Caco-2 (cell line): ENCODE measurements at regions of chr4 and their contacts with region 1.

Region 1: DNA sequence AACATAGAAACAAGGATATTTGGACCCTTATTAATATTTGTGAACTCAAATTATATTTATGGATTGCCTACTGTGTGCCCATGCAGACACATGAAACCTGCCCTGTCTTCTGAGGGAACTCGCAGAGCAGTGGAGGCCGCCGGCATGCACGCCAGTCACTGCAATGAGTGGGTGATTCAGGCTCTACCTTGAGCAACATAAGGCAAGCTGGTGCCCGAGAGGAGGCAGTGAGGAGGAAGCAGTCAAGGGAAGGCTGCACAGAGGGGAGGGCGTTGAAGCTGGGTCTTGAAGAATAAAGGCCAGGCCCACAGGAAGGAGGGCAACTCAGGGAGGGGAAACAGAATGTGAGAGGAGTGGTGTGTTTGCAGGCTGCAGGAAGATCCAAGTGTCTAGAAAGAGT is 52.8 kb downstream of the PPEF2 start:
- DNase-seq: no peak
- H3K4me3 ChIP-seq: no peak overlapping the region
- H3K4me3 Mint-ChIP-seq: no peak overlapping the region
- H3K27ac Mint-ChIP-seq: no peak overlapping the region
- H3K4me1 ChIP-seq: peaks cover 19% of the 10 kb centered on the region
- H3K4me1 Mint-ChIP-seq: peaks cover 7% of the 10 kb centered on the region
- H3K27me3 ChIP-seq: no peaks in the 10 kb centered on the region
- H3K27me3 Mint-ChIP-seq: no peaks in the 10 kb centered on the region
- CTCF ChIP-seq: no peak

Region 2: GRCh38 chr4:75653845-75654503 is 195.5 kb before region 1 on chr4:
- CTCF ChIA-PET with region 1: interaction called, 3 read pairs
- POLR2A ChIA-PET with region 1: no interaction called
- intact Hi-C with region 1: loop called (anchors 1 kb)
- DNase-seq: peak in 1 of 2 experiments; percentile 56
- H3K4me3 ChIP-seq: no peak overlapping the region
- H3K4me3 Mint-ChIP-seq: no peak overlapping the region
- H3K27ac Mint-ChIP-seq: no peak overlapping the region
- H3K4me1 ChIP-seq: peaks cover 37% of the 10 kb centered on the region
- H3K4me1 Mint-ChIP-seq: peaks cover 6% of the 10 kb centered on the region
- H3K27me3 ChIP-seq: no peaks in the 10 kb centered on the region
- H3K27me3 Mint-ChIP-seq: no peaks in the 10 kb centered on the region
- CTCF ChIP-seq: peak; percentile 43 to 67

Region 3: DNA sequence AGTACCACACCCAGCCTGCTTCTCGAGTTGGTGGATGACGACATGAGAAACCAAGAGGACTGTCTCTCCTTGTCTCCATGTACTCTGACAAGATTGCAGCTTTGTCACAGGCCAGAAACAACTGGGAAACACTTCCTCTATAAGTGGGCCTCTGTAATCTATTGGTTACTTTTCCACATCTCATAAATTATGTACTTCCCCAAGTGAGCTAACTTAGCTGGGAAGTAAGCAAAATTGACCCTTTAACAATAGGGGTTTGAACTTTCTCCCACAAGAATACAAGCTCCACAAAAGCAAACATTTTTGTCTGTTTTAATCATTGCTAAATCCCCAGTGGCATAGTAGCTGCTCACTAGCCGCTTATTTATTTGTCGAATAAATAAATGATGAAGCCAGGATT is 139.2 kb before region 1 on chr4:
- CTCF ChIA-PET with region 1: no interaction called
- POLR2A ChIA-PET with region 1: no interaction called
- intact Hi-C with region 1: no loop called
- DNase-seq: no peak
- H3K4me3 ChIP-seq: no peak overlapping the region
- H3K4me3 Mint-ChIP-seq: no peak overlapping the region
- H3K27ac Mint-ChIP-seq: no peak overlapping the region
- H3K4me1 ChIP-seq: peaks cover 4% of the 10 kb centered on the region; the same call in 1 of the 2 replicates
- H3K4me1 Mint-ChIP-seq: peaks cover 4% of the 10 kb centered on the region
- H3K27me3 ChIP-seq: no peaks in the 10 kb centered on the region
- H3K27me3 Mint-ChIP-seq: no peaks in the 10 kb centered on the region
- CTCF ChIP-seq: no peak

Region 4: GRCh38 chr4:75724066-75724866 is 125.2 kb before region 1 on chr4 and contains the start of gene USO1:
- CTCF ChIA-PET with region 1: interaction called, 13 read pairs
- POLR2A ChIA-PET with region 1: interaction called, 5 read pairs
- intact Hi-C with region 1: loop called (anchors 1 kb)
- DNase-seq: peak; percentile 98 to 99
- H3K4me3 ChIP-seq: peak within 1 kb of the TSS; percentile 99
- H3K4me3 Mint-ChIP-seq: peak within 1 kb of the TSS; percentile 90
- H3K27ac Mint-ChIP-seq: peak within 1 kb of the TSS; percentile 99
- H3K4me1 ChIP-seq: peaks cover 18% of the 10 kb centered on the region; the same call in 1 of the 2 replicates
- H3K4me1 Mint-ChIP-seq: peaks cover 15% of the 10 kb centered on the region
- H3K27me3 ChIP-seq: no peaks in the 10 kb centered on the region
- H3K27me3 Mint-ChIP-seq: no peaks in the 10 kb centered on the region
- CTCF ChIP-seq: peak; percentile 76 to 81
- total RNA-seq, gene USO1: 55.4 and 59.7 TPM in 2 replicates

Region 5: DNA sequence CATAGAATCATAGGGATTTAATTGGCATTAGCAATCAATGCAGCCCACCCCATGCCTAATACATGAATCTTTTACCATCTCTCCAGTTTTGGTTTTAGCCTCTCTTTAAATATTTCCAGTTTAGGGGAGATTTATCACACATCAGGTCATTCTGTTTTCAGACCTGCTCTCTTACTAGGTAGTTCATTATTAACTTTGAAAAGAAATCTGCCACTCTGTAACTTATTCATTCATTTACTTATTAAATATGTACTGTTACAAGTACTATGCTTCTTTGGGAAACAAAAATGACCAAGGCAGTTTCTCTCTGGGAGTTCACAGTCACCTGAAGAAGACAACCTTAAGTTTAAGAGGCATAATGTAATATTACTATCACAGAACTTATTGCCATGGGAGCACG is 62.9 kb before region 1 on chr4:
- CTCF ChIA-PET with region 1: no interaction called
- POLR2A ChIA-PET with region 1: no interaction called
- intact Hi-C with region 1: loop called (anchors 2 kb)
- DNase-seq: no peak
- H3K4me3 ChIP-seq: no peak overlapping the region
- H3K4me3 Mint-ChIP-seq: no peak overlapping the region
- H3K27ac Mint-ChIP-seq: no peak overlapping the region
- H3K4me1 ChIP-seq: no peaks in the 10 kb centered on the region
- H3K4me1 Mint-ChIP-seq: no peaks in the 10 kb centered on the region
- H3K27me3 ChIP-seq: no peaks in the 10 kb centered on the region
- H3K27me3 Mint-ChIP-seq: no peaks in the 10 kb centered on the region
- CTCF ChIP-seq: no peak

Region 6: DNA sequence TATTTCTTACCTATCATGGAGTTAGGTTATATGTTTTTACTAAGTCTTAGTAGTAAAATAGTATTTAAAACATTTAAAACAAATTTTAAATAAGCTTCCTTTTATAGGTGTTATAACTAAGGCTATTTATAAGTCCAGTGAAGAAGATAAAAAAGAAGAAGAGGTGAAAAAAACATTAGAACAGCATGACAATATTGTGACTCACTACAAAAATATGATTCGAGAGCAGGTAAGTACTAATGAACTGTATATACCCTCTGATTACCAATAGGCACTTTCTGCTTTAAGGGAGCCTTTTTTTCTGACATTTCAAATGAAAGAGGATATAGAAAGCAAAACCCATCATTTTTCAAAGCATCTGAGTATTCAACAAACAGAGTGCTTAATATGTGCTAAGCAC is 48.5 kb before region 1 on chr4:
- CTCF ChIA-PET with region 1: interaction called, 3 read pairs
- POLR2A ChIA-PET with region 1: no interaction called
- intact Hi-C with region 1: loop called (anchors 5 kb)
- DNase-seq: no peak
- H3K4me3 ChIP-seq: no peak overlapping the region
- H3K4me3 Mint-ChIP-seq: no peak overlapping the region
- H3K27ac Mint-ChIP-seq: no peak overlapping the region
- H3K4me1 ChIP-seq: no peaks in the 10 kb centered on the region
- H3K4me1 Mint-ChIP-seq: no peaks in the 10 kb centered on the region
- H3K27me3 ChIP-seq: no peaks in the 10 kb centered on the region
- H3K27me3 Mint-ChIP-seq: no peaks in the 10 kb centered on the region
- CTCF ChIP-seq: no peak

Region 7: DNA sequence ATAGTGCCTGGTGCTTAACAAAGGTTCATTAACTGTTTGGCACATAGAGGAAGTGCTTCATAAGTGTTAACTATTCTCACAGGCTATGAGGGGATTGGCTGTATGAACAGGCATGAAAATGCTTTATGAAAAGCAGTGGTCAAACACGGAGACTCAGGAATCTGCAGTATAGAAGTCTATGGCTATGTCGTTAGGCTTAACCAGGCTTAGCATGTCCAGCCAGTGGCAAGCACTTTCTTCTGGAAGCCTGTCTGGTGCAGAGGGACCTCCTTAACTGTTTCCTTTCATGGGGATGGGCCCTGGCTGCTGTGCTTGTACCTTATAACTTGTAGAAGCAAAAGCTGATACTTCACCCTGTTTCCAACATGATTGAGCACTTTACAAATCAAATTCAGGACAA is 25.6 kb before region 1 on chr4:
- CTCF ChIA-PET with region 1: interaction called, 3 read pairs
- POLR2A ChIA-PET with region 1: no interaction called
- intact Hi-C with region 1: loop called (anchors 1 kb)
- DNase-seq: no peak
- H3K4me3 ChIP-seq: no peak overlapping the region
- H3K4me3 Mint-ChIP-seq: no peak overlapping the region
- H3K27ac Mint-ChIP-seq: no peak overlapping the region
- H3K4me1 ChIP-seq: 0 out of 2 replicates have a peak, but pooled peaks cover 6% of the 10 kb centered on the region
- H3K4me1 Mint-ChIP-seq: no peaks in the 10 kb centered on the region
- H3K27me3 ChIP-seq: no peaks in the 10 kb centered on the region
- H3K27me3 Mint-ChIP-seq: no peaks in the 10 kb centered on the region
- CTCF ChIP-seq: no peak

Region 8: DNA sequence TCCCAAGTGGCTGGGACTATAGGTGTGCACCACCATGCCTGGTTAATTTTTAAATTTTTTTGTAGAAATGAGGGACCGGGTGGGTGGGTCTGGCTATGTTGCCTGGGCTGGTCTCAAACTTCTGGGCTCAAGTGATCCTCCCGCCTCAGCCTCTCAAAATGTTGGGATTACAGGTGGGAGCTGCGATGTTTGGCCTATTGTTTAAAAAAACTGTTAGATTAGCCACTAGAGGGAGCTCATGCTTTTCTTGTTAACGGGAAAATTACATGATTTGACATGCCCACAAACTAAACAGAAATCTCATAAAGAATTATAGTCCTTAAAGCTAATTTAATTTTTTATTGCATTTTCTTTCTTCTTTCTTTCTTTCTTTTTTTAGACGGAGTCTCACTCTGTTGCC is 146.3 kb after region 1 on chr4:
- CTCF ChIA-PET with region 1: no interaction called
- POLR2A ChIA-PET with region 1: no interaction called
- intact Hi-C with region 1: no loop called
- DNase-seq: peak in 1 of 2 experiments; percentile 49
- H3K4me3 ChIP-seq: no peak overlapping the region
- H3K4me3 Mint-ChIP-seq: no peak overlapping the region
- H3K27ac Mint-ChIP-seq: no peak overlapping the region
- H3K4me1 ChIP-seq: 0 out of 2 replicates have a peak, but pooled peaks cover 3% of the 10 kb centered on the region
- H3K4me1 Mint-ChIP-seq: peaks cover 9% of the 10 kb centered on the region
- H3K27me3 ChIP-seq: no peaks in the 10 kb centered on the region
- H3K27me3 Mint-ChIP-seq: no peaks in the 10 kb centered on the region
- CTCF ChIP-seq: peak; percentile 48 to 54